ENCODE measurements at regions of chr19 and their contacts with region 1.

Region 1: DNA sequence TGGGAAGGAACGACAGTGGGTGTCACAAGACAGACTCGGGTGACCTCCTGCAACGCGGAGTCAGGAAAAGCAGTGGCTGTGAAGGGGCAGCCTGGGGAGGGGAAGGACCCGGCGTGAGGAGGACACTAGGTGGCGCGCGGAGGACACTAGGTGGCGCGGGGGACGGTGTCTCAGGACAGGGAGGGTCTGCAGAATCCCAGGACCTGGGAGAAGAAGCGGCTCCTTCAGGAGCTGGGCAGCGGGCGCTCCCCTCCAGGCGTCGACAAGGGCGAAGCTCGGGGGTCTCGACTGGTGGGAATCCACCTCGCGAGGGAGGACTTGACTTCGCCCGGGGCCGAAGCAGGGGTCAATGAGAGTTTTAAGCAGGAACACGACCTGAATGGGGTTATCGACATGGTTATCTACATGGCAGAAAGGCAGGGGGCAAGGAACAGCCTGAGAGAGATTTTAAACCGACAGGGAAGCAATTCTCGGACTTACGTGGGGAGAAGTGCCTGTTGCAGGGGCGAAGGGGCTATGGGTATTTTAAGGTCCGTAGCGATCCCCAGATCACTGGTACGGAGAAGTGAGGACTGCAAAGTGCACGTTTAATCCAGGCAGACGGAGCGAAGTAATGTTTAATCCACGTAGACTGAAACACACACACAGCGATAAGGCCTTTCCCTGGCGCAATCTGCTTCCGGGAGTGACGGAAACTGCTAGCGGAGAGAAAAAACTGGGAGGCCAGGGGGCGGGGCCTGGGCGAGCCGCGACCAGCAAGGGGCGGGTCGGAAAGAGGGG is at the start of gene ZNF616:
- DNase-seq: peak; percentile 89 to 91 (median 90)
- H3K4me3 ChIP-seq: peak within 1 kb of the TSS; percentile 91 to 97 (median 94)
- H3K4me3 Mint-ChIP-seq: peak within 1 kb of the TSS; percentile 98 to 99
- H3K27ac ChIP-seq: peak within 1 kb of the TSS; percentile 85 to 93
- H3K27ac Mint-ChIP-seq: peak within 1 kb of the TSS; percentile 96 to 98 (median 96)
- H3K4me1 ChIP-seq: peaks cover 12 to 16% of the 10 kb centered on the region in 2 donors
- H3K4me1 Mint-ChIP-seq: peaks cover 16% of the 10 kb centered on the region
- H3K27me3 ChIP-seq: no peaks in the 10 kb centered on the region
- H3K27me3 Mint-ChIP-seq: peaks cover 0 to 4% (median 0%) of the 10 kb centered on the region in 3 donors
- CTCF ChIP-seq: peak; percentile 94
- polyA plus RNA-seq, gene ZNF616: 0.32 to 1.8 (median 1.1) TPM

Region 2: DNA sequence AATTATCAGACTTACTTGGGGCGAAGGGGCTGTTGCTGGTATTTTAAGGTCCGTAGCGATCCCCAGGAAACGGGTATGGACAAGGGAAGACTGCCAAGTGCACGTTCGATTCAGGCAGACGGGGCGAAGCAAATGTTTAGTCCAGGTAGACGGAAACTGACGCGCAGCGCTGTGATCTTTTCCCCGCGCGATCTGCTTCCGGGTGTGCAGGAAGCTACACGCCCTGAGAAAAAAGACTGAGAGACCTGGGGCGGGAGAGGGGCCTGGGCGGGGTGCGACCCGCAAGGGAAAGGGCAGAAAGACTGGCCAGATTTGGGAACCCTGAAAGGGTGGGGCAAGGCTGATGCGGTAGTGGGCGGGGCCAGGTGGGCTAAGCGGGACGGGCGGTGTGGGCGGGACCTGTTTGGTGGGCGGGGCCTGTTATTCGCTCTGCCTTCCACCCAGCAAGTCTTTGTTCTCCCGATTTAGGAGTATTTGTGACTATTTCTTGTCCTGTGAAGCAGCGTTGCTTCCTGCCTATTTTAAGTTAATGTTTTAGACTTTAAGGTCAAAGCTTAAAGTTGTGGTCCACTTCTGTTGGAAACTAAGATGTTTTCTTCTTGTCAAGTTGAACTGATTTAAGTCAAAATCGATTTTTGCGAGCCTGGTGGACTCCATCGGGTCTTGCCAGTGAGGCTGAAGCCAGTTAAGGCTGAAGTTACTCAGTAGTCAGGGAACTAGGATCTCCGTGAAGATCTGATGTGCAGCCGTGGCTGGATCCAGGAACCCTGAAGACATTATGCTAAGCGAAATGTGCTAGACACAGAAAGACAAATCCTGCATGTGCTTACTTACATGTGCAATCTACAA is 32.1 kb after region 1 on chr19 and contains the start of gene ZNF836:
- intact Hi-C with region 1: loop called in 1 of 2 experiments (anchors 2 kb)
- DNase-seq: peak; percentile 62 to 71 (median 69)
- H3K4me3 ChIP-seq: peak within 1 kb of the TSS; percentile 66 to 98 (median 87)
- H3K4me3 Mint-ChIP-seq: peak within 1 kb of the TSS; percentile 99 to 100
- H3K27ac ChIP-seq: peak within 1 kb of the TSS; percentile 47 to 88
- H3K27ac Mint-ChIP-seq: peak within 1 kb of the TSS; percentile 89 to 96 (median 94)
- H3K4me1 ChIP-seq: peaks cover 12 to 17% of the 10 kb centered on the region in 2 donors
- H3K4me1 Mint-ChIP-seq: peaks cover 20% of the 10 kb centered on the region
- H3K27me3 ChIP-seq: no peaks in the 10 kb centered on the region
- H3K27me3 Mint-ChIP-seq: peaks cover 5 to 11% (median 5%) of the 10 kb centered on the region in 3 donors
- CTCF ChIP-seq: no peak
- polyA plus RNA-seq, gene ZNF836: 2.3 to 4.8 (median 2.6) TPM

Region 3: DNA sequence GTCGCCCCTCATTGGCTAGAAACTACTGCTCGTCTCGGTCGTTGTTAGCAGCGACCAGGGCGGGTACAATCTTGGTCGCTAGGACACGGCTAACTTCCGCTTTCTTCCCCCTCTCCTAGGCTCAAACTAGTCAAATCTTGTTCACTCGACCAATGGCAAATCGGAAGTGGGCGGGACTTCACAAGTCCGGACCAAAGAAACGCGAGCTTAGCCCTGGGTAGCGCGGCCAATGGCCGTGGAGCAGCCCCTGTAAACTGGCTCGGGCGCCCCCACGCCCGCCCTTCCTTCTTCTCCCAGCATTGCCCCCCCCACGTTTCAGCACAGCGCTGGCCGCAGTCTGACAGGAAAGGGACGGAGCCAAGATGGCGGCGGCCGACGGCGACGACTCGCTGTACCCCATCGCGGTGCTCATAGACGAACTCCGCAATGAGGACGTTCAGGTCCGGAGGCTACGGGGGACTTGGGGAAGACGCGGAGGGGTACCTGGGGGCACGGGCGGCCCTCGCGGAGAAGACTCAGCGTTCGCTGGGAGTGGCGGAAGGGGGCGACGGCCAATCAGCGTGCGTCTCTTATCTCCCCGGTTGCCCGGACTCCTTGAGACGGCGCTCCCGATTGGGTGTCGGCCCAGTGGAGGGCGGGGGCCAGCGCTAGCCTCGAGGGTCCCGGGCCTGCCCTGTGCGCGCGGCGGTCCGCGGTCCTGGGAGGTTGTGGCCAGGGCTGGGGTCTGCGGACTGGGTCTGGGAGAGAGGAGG is 50.5 kb after region 1 on chr19 and contains the start of gene PPP2R1A:
- intact Hi-C with region 1: loop called (anchors 2 to 5 kb)
- DNase-seq: peak; percentile 100
- H3K4me3 ChIP-seq: peak within 1 kb of the TSS; percentile 85 to 94 (median 88)
- H3K4me3 Mint-ChIP-seq: peak within 1 kb of the TSS; percentile 90 to 99
- H3K27ac ChIP-seq: peak within 1 kb of the TSS; percentile 95 to 99
- H3K27ac Mint-ChIP-seq: peak within 1 kb of the TSS; percentile 98 to 100 (median 100)
- H3K4me1 ChIP-seq: peaks cover 20 to 24% of the 10 kb centered on the region in 2 donors
- H3K4me1 Mint-ChIP-seq: peaks cover 32% of the 10 kb centered on the region
- H3K27me3 ChIP-seq: no peaks in the 10 kb centered on the region
- H3K27me3 Mint-ChIP-seq: peaks cover 1 to 6% (median 4%) of the 10 kb centered on the region in 3 donors
- CTCF ChIP-seq: no peak
- polyA plus RNA-seq, gene PPP2R1A: 79.9 to 151 (median 127) TPM

Region 4: GRCh38 chr19:52237771-52238400 is 98.4 kb after region 1 on chr19:
- intact Hi-C with region 1: loop called in 1 of 2 experiments (anchors 2 kb)
- DNase-seq: peak; percentile 34 to 52 (median 52)
- H3K4me3 ChIP-seq: no peak overlapping the region
- H3K4me3 Mint-ChIP-seq: no peak overlapping the region
- H3K27ac ChIP-seq: no peak overlapping the region
- H3K27ac Mint-ChIP-seq: no peak overlapping the region
- H3K4me1 ChIP-seq: no peaks in the 10 kb centered on the region
- H3K4me1 Mint-ChIP-seq: no peaks in the 10 kb centered on the region
- H3K27me3 ChIP-seq: no peaks in the 10 kb centered on the region
- H3K27me3 Mint-ChIP-seq: peaks cover 2 to 6% (median 4%) of the 10 kb centered on the region in 3 donors
- CTCF ChIP-seq: peak; percentile 90

Region 5: GRCh38 chr19:52296773-52297600 is 157.5 kb after region 1 on chr19 and contains the start of gene ZNF480:
- intact Hi-C with region 1: loop called in 1 of 2 experiments (anchors 5 kb)
- DNase-seq: peak; percentile 80 to 86 (median 82)
- H3K4me3 ChIP-seq: peak within 1 kb of the TSS; percentile 93 to 99 (median 94)
- H3K4me3 Mint-ChIP-seq: peak within 1 kb of the TSS; percentile 95 to 97
- H3K27ac ChIP-seq: peak within 1 kb of the TSS; percentile 88 to 94
- H3K27ac Mint-ChIP-seq: peak within 1 kb of the TSS; percentile 91 to 98 (median 94)
- H3K4me1 ChIP-seq: peaks cover 15 to 18% of the 10 kb centered on the region in 2 donors
- H3K4me1 Mint-ChIP-seq: peaks cover 17% of the 10 kb centered on the region
- H3K27me3 ChIP-seq: no peaks in the 10 kb centered on the region
- H3K27me3 Mint-ChIP-seq: peaks cover 0 to 1% (median 0%) of the 10 kb centered on the region in 3 donors
- CTCF ChIP-seq: no peak
- polyA plus RNA-seq, gene ZNF480: 6.6 to 7.6 (median 7.4) TPM

Measured in CD14-positive monocyte (primary cell).